ENCODE measurements at regions of chr17 and their contacts with region 1.

Region 1: GRCh38 chr17:82913295-82914042 is 73.6 kb upstream of the ZNF750 start:
- DNase-seq: no peak
- H3K4me3 ChIP-seq: no peak overlapping the region
- H3K27ac ChIP-seq: no peak overlapping the region
- H3K4me1 ChIP-seq: no peaks in the 10 kb centered on the region
- H3K27me3 ChIP-seq: no peaks in the 10 kb centered on the region
- CTCF ChIP-seq: peak; percentile 48 to 66 (median 56)
- EP300 ChIP-seq: no peak
- POLR2A ChIP-seq: no peak
- RAD21 ChIP-seq: peak; percentile 59 to 67

Region 2: GRCh38 chr17:82823004-82823403 is 90.5 kb before region 1 on chr17:
- CTCF ChIA-PET with region 1: interaction called, 11 read pairs
- POLR2A ChIA-PET with region 1: no interaction called
- DNase-seq: peak in 1 of 2 experiments; percentile 68
- H3K4me3 ChIP-seq: no peak overlapping the region
- H3K27ac ChIP-seq: no peak overlapping the region
- H3K4me1 ChIP-seq: peaks cover 0 to 2% (median 0%) of the 10 kb centered on the region in 4 experiments; a peak in 2 of 7 replicates
- H3K27me3 ChIP-seq: no peaks in the 10 kb centered on the region
- CTCF ChIP-seq: peak; percentile 53 to 67 (median 60)
- EP300 ChIP-seq: no peak
- POLR2A ChIP-seq: no peak
- RAD21 ChIP-seq: peak; percentile 13 to 48; a peak in 2 of 4 replicates

Region 3: GRCh38 chr17:82900370-82901140 is 12.9 kb before region 1 on chr17:
- CTCF ChIA-PET with region 1: interaction called, 13 read pairs
- POLR2A ChIA-PET with region 1: no interaction called
- DNase-seq: no peak
- H3K4me3 ChIP-seq: no peak overlapping the region
- H3K27ac ChIP-seq: no peak overlapping the region
- H3K4me1 ChIP-seq: no peaks in the 10 kb centered on the region; a peak in 1 of 7 replicates
- H3K27me3 ChIP-seq: no peaks in the 10 kb centered on the region
- CTCF ChIP-seq: no peak
- EP300 ChIP-seq: no peak
- POLR2A ChIP-seq: no peak
- RAD21 ChIP-seq: no peak

Region 4: DNA sequence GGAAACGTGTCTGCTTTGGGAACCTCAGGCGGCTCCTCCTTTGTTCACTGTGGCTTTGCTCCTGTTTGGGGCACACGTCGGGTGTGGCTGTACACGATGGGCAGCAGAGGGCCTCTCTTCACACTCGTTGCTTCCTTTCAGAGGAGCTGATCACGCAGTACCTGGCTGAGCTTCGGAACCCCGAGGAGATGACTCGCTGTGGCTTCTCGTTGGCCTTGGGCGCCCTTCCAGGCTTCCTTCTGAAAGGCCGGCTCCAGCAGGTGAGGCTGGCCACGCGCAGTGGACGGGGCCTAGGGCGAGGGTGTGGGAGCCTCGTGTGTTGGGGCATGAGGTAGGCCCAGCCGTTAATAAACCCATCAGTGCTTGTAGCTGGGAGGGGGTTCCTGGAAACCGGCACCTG is 11.3 kb after region 1 on chr17:
- CTCF ChIA-PET with region 1: interaction called, 16 read pairs
- POLR2A ChIA-PET with region 1: no interaction called
- DNase-seq: no peak
- H3K4me3 ChIP-seq: no peak overlapping the region
- H3K27ac ChIP-seq: no peak overlapping the region
- H3K4me1 ChIP-seq: no peaks in the 10 kb centered on the region
- H3K27me3 ChIP-seq: no peaks in the 10 kb centered on the region
- CTCF ChIP-seq: 0 out of 4 replicates have a peak, but pooled peaks of 1 of the 3 experiments have one; percentile 1
- EP300 ChIP-seq: no peak
- POLR2A ChIP-seq: no peak
- RAD21 ChIP-seq: no peak

Measured in H1 (cell line).